ENCODE measurements at regions of chr17 and their contacts with region 1.

Region 1: DNA sequence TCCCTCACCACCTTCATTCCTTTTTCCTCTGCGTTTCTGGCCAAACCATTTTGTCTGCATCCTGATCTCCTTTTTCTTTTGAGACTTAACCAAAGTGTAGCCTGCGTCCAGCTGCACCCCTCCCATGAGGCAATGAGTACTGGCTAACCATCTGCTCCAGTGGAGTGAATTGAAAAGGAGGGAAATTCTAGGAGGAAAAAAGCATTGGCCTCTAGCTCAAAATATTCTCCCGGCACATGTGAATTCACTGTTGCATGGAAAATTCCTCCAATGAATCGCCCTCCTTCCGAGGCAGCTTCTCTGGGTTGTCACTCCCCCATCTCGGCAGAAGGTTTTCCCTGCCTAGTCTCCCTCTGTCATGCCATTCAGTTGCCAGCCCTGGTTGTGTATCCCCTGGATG is 5.6 kb downstream of the RAP1GAP2 start:
- DNase-seq: no peak
- ATAC-seq: no peak
- H3K4me3 ChIP-seq: no peak overlapping the region
- H3K27ac ChIP-seq: no peak overlapping the region
- H3K4me1 ChIP-seq: no peaks in the 10 kb centered on the region
- H3K27me3 ChIP-seq: no peaks in the 10 kb centered on the region

Region 2: DNA sequence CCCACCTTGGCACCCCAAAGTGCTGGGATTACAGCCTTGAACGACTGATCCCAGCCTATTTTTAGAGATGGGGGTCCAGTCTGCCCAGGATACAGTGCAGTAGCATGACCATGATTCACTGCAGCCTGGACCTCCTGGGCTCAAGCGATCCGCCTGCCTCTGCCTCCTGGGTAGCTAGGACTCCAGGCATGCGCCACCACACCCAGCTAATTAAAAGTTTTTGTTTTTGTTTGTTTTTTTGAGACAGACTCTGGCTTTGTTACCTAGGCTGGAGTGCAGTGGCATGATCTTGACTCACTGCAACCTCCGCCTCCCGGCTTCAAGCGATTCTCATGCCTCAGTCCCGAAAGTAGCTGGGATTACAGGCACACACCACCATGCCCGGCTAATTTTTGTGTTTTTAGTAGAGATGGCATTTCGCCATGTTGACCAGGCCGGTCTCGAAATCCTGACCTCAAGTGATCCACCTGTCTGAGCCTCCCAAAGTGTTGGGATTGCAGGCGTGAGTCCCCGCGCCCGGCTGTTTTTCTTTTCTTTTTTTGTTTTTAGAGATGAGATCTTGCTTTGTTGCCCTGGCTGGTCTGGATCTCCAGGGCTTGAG is 210.7 kb before region 1 on chr17:
- intact Hi-C with region 1: no loop called
- DNase-seq: no peak
- ATAC-seq: no peak
- H3K4me3 ChIP-seq: no peak overlapping the region
- H3K27ac ChIP-seq: no peak overlapping the region
- H3K4me1 ChIP-seq: no peaks in the 10 kb centered on the region
- H3K27me3 ChIP-seq: no peaks in the 10 kb centered on the region

Region 3: GRCh38 chr17:2755891-2756724 is 45.7 kb before region 1 on chr17:
- intact Hi-C with region 1: loop called in 1 of 4 experiments (anchors 2 kb)
- DNase-seq: peak in 1 of 3 donors; percentile 64
- ATAC-seq: peak; percentile 49 to 59
- H3K4me3 ChIP-seq: peak overlapping the region; percentile 45
- H3K27ac ChIP-seq: no peak overlapping the region
- H3K4me1 ChIP-seq: no peaks in the 10 kb centered on the region
- H3K27me3 ChIP-seq: no peaks in the 10 kb centered on the region

Region 4: DNA sequence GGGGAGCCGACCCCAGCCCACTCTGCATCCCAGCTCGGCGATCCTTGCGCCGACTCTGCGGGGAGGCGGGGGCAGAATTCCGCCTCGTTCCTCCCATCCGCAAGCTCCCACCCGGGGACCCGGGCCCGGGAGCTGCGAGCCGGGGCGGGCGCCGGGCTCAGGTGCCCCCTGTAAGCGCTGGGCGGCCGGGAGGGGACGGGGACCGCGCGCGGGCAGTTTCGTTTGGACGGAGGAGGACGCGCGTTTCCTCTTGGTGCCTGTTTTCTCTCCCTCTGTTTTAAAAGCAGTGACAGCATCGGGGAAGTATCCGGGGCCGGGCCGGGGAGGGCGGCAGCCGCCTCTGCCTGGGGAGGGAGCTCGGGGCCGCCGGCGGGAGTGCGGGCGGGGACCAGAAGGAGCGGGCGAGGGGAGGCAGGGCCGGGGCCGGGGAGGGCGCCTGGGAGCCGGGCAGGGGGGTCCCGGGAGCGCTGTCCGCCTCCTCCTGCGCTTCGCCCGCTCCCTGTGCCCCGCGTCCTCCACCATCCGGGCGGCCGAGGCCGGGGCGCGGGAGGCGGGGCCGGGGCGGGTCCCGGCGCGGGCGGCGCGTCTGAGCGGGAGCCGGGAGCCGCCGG is 51.4 kb after region 1 on chr17:
- intact Hi-C with region 1: no loop called
- DNase-seq: peak; percentile 46 to 83 (median 76)
- ATAC-seq: peak; percentile 50 to 53
- H3K4me3 ChIP-seq: peak overlapping the region; percentile 89
- H3K27ac ChIP-seq: peak overlapping the region; percentile 66
- H3K4me1 ChIP-seq: no peaks in the 10 kb centered on the region
- H3K27me3 ChIP-seq: no peaks in the 10 kb centered on the region